Mammary epithelial cell (primary cell): ENCODE measurements at regions of chr5 and their contacts with region 1.

Region 1: DNA sequence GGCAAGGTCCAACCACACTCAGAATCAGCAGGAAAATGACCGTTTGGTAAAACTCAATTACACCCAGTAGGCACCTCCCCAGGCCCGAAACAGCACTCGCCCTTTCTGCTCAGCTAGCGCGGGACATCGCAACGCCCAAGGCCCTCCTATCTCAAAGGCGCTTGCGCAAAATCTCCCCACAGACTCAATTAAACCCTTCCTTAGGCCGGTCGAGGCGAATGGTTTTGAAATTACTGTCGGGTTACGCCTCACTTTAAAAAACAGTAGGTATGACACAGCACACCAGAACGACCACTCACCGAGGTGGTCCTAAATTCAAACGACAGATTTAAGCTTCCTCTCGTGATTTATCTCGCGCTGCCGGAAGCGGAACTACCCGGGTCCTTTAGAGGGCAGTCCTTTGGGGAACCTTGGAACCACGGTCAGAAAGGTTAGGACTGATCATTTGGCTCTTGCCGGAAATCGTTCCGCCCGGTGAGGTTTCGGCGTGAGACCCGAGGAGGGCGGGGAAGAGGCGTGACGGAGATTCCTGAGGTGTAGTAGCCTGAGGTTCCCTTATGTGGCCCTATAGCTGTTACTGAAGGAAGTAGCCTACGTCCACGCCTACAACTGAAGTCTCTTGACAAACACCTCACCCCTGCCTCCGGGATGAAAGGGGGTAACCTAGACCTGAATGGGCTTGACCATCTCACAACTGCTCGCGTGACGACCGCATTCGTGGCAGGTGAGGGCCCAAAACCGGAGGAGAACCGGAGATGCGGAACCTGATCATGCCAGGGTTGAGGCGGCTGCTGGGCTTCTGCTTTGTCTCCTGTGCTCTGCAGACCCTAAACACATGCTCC is at the starts of genes GIN1 and PPIP5K2:
- DNase-seq: peak; percentile 98
- H3K4me3 ChIP-seq: peak within 1 kb of the TSS; percentile 67 to 91 (median 84)
- H3K27ac ChIP-seq: peak within 1 kb of the TSS; percentile 96
- H3K4me1 ChIP-seq: no peaks in the 10 kb centered on the region
- H3K27me3 ChIP-seq: no peaks in the 10 kb centered on the region
- CTCF ChIP-seq: no peak
- total RNA-seq, gene GIN1: 3.8 to 9.3 TPM
- total RNA-seq, gene PPIP5K2: 41.9 to 50.3 TPM

Region 2: GRCh38 chr5:102670224-102670836 is 449.7 kb before region 1 on chr5:
- CTCF ChIA-PET with region 1: no interaction called
- dilution Hi-C with region 1: no loop called
- in situ Hi-C with region 1: no loop called
- intact Hi-C with region 1: loop called (anchors 10 kb)
- DNase-seq: peak; percentile 12
- H3K4me3 ChIP-seq: no peak overlapping the region
- H3K27ac ChIP-seq: no peak overlapping the region
- H3K4me1 ChIP-seq: no peaks in the 10 kb centered on the region
- H3K27me3 ChIP-seq: peaks cover 5% of the 10 kb centered on the region
- CTCF ChIP-seq: peak; percentile 83

Region 3: DNA sequence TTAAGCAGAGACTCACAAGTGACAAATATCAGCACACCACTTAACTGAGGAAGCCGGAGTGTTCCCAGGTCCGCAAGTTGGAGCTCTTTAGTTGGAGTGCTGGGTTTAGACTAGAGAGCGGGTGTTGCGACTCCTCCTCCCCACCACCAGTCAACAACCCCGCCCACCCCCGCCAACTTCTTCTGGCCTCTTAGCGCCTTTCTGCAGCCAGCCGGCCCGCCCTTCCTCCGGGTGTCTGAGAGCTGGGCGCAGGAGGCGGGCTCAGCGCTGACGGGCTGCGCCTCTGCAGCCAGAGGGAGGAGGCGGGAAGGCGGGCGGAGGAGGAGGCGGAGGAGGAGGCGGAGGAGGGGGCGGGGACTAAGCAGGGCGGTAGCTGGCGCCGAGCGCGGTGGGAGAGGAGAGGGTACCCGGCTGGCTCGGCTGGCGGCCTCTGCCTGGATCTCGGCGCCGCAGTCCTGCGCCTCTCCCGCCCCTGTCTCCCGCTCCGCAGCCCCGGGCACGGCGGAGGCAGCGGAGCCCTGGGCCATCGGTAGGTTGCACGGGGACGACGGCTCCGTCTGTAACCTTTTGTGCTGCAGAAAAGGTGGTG is 138.5 kb after region 1 on chr5 and contains the start of gene MACIR:
- CTCF ChIA-PET with region 1: no interaction called
- dilution Hi-C with region 1: no loop called
- in situ Hi-C with region 1: no loop called
- intact Hi-C with region 1: loop called (anchors 1 kb)
- DNase-seq: peak; percentile 98
- H3K4me3 ChIP-seq: peak within 1 kb of the TSS; percentile 86 to 88 (median 88)
- H3K27ac ChIP-seq: peak within 1 kb of the TSS; percentile 35
- H3K4me1 ChIP-seq: peaks cover 5% of the 10 kb centered on the region
- H3K27me3 ChIP-seq: no peaks in the 10 kb centered on the region
- CTCF ChIP-seq: no peak
- total RNA-seq, gene MACIR: 7.2 to 7.5 TPM